Heart left ventricle (tissue), 16 donors: ENCODE measurements at regions of chr12 and their contacts with region 1.

Region 1: GRCh38 chr12:106126441-106127337 is 12.1 kb downstream of the NUAK1 start:
- DNase-seq: no peak
- ATAC-seq: no peak
- H3K4me3 ChIP-seq: no peak overlapping the region
- H3K27ac ChIP-seq: peak overlapping the region in 11 of 12 donors; percentile 65 to 100 (median 92)
- H3K4me1 ChIP-seq: peaks cover 8 to 100% (median 80%) of the 10 kb centered on the region in 12 donors
- H3K27me3 ChIP-seq: no peaks in the 10 kb centered on the region
- CTCF ChIP-seq: no peak
- POLR2A ChIP-seq: no peak

Region 2: DNA sequence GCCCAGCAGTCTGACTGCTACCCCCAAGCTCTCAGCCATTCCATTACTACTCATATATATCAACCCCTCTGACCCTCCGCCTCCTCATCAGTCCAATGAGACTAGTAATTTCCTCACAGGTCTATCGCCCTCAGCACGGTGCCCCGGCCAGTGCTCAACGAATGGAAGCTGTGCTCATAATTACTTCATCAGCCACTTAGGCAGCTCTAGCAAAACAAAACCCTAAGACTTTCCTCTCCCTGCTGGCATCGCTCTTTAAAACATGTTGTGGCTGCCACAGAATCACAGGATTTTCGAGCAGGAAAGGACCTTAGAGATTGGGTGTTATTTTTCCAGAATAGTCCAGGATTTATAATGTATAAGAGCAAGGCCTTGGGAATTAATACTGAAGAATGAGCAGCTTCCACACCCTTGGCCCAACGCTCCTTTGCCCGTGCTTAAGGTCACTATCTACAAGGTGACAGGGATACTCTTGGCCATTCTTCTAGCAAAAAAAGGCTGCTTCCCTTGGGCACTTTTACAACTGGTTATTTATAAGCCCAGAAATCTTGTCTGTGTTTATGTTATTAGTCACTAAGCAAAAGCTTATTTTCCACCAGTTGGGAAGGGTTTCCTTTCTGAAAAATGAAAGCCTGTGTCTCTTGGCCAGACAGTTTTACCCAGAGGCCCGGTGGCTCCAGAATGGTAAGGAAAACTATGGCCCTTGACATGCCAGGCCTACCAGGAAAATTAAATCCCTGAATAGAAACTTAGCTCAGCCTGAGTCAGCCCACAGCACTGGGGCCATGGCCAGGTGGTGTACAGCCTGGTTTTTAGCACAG is 35.9 kb before region 1 on chr12:
- intact Hi-C with region 1: loop called in 2 of 10 experiments (anchors 5 kb)
- DNase-seq: peak in 4 of 5 donors; percentile 71 to 80 (median 73)
- ATAC-seq: peak; percentile 85 to 91 (median 90)
- H3K4me3 ChIP-seq: no peak overlapping the region
- H3K27ac ChIP-seq: peak overlapping the region; percentile 66 to 91 (median 84)
- H3K4me1 ChIP-seq: peaks cover 8 to 87% (median 56%) of the 10 kb centered on the region in 12 donors
- H3K27me3 ChIP-seq: no peaks in the 10 kb centered on the region
- CTCF ChIP-seq: no peak
- POLR2A ChIP-seq: no peak